WTC11 (cell line): ENCODE measurements at regions of chrX and their contacts with region 1.

Region 1: DNA sequence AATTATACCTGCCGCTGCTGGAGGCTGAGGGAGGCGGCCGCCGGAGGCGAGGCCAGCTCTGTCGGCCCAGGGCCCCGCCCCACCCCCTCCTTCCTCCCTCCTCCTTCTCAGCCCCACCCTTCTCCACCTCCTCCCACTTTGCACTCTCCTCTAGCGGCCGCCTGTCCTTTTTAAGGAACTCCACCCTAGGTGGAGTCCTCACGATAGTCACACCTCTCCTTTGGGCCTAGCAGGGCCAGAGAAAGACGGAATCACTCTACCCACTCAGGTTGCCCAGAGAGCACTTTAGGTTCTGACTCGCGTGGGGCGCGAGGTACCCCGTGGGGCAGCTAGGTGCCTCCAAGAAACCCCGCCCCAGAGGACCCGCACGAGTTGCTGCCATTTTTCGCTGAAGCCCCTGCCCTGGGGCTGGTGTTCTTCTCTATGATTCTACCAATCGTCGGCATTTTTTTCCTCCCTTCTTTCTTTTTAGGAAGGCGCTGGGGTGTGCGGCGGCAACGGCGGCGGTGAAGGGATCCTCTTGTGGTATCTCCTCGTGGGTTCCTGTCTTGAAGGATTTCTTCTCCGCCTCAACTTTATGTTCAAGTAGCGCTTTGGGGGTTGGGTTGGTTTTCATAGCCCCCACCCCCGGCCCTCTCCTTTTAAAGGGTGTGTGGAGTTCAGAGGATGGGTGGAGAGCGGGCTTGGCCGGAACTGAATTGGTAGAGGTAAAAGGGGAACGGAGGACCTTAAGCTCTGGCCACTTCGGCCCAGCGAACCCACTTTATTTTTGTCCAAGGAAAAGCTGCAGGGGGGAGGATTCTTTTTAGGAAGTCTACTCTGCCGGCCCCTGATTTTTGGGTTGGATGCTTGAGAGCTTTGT is at the start of gene KLF8:
- DNase-seq: peak; percentile 50
- ATAC-seq: peak; percentile 62
- H3K4me3 Mint-ChIP-seq: peak within 1 kb of the TSS; percentile 83
- H3K27ac Mint-ChIP-seq: peak within 1 kb of the TSS; percentile 88
- H3K4me1 Mint-ChIP-seq: peaks cover 17% of the 10 kb centered on the region
- H3K27me3 Mint-ChIP-seq: no peaks in the 10 kb centered on the region
- CTCF ChIP-seq: no peak
- total RNA-seq, gene KLF8: 10.2 to 11.4 TPM (median 11.1 TPM) in 3 replicates

Region 2: GRCh38 chrX:56248492-56248891 is 16.0 kb after region 1 on chrX:
- CTCF ChIA-PET with region 1: interaction called, 25 read pairs
- POLR2A ChIA-PET with region 1: interaction called, 3 read pairs
- DNase-seq: peak; percentile 45
- ATAC-seq: peak; percentile 71
- H3K4me3 Mint-ChIP-seq: no peak overlapping the region
- H3K27ac Mint-ChIP-seq: no peak overlapping the region
- H3K4me1 Mint-ChIP-seq: 0 out of 2 replicates have a peak, but pooled peaks cover 3% of the 10 kb centered on the region
- H3K27me3 Mint-ChIP-seq: no peaks in the 10 kb centered on the region
- CTCF ChIP-seq: 0 out of 2 replicates have a peak, but pooled peaks have one; percentile 18

Region 3: DNA sequence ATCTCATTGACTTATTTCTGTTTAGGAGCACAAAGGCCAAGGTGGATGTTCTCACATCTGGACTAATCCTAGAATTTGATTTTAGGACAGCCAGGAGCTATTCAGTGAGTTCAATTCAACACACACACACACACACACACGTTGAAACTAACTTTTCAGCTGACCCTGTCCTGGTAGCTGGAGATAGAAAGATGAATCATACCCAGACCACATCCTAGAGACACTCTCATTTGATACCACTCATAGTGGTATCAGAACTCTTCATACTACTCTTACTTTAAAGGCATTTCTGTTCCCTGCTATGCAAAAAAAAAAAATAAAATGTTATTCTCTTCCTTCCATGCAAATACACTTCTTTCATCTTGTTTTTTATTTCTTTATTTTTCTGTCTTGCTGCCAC is 36.4 kb after region 1 on chrX:
- CTCF ChIA-PET with region 1: no interaction called
- POLR2A ChIA-PET with region 1: no interaction called
- DNase-seq: no peak
- ATAC-seq: no peak
- H3K4me3 Mint-ChIP-seq: no peak overlapping the region
- H3K27ac Mint-ChIP-seq: no peak overlapping the region
- H3K4me1 Mint-ChIP-seq: no peaks in the 10 kb centered on the region
- H3K27me3 Mint-ChIP-seq: no peaks in the 10 kb centered on the region
- CTCF ChIP-seq: no peak